Activated CD4-positive, alpha-beta memory T cell treated with anti-CD3 and anti-CD28 coated beads, Interleukin-2, amount 10 ng/mL, durations not matched to agents 7 days and 5 days (primary cell): ENCODE measurements at regions of chr7 and their contacts with region 1.

Region 1: DNA sequence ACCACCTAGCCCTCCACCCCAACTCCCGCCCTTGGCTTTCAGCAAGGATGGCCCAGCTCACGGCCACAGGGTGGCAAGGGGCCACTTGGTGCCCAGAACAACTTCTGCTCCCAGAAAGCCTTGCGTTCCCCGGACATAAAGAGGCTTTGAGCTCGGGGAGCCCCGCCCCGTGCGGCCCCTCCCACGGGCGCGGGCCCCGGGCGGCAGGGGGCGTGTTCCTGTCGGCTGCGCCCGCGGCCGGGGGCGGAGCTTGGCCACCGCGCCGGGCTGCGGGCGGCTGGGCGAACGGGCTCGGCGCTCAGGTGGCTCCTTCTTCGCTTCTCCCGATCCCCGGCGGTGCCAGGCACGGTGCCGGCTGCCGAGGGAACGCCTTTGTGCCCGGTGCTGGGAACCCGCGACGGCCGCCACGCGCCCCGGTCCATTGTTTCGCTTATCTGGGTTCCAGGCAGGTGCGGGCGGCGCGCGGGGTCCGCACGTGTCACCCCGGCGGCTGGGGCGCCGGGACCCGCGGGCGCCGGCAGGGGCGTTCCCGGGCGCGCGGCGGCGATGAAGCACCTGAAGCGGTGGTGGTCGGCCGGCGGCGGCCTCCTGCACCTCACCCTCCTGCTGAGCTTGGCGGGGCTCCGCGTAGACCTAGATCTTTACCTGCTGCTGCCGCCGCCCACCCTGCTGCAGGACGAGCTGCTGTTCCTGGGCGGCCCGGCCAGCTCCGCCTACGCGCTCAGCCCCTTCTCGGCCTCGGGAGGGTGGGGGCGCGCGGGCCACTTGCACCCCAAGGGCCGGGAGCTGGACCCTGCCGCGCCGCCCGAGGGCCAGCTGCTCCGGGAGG is at the start of gene NFE2L3:
- DNase-seq: peak; percentile 88
- H3K4me3 Mint-ChIP-seq: peak within 1 kb of the TSS; percentile 94
- H3K27ac Mint-ChIP-seq: peak within 1 kb of the TSS; percentile 97
- H3K4me1 Mint-ChIP-seq: peaks cover 55% of the 10 kb centered on the region
- H3K27me3 Mint-ChIP-seq: no peaks in the 10 kb centered on the region
- total RNA-seq, gene NFE2L3: 21.5 to 24.0 TPM

Region 2: GRCh38 chr7:26167301-26167934 is 15.3 kb after region 1 on chr7:
- CTCF ChIA-PET with region 1: interaction called, 8 read pairs
- POLR2A ChIA-PET with region 1: interaction called, 34 read pairs
- DNase-seq: peak; percentile 44
- H3K4me3 Mint-ChIP-seq: no peak overlapping the region
- H3K27ac Mint-ChIP-seq: peak overlapping the region; percentile 75
- H3K4me1 Mint-ChIP-seq: peaks cover 36% of the 10 kb centered on the region
- H3K27me3 Mint-ChIP-seq: no peaks in the 10 kb centered on the region

Region 3: GRCh38 chr7:26187380-26188205 is 35.4 kb after region 1 on chr7:
- CTCF ChIA-PET with region 1: interaction called, 7 read pairs
- POLR2A ChIA-PET with region 1: interaction called, 406 read pairs
- DNase-seq: no peak
- H3K4me3 Mint-ChIP-seq: no peak overlapping the region
- H3K27ac Mint-ChIP-seq: peak overlapping the region; percentile 63
- H3K4me1 Mint-ChIP-seq: peaks cover 78% of the 10 kb centered on the region
- H3K27me3 Mint-ChIP-seq: no peaks in the 10 kb centered on the region

Region 4: GRCh38 chr7:26291699-26292538 is 139.8 kb after region 1 on chr7 and contains the start of gene SNX10:
- CTCF ChIA-PET with region 1: no interaction called
- POLR2A ChIA-PET with region 1: interaction called, 10 read pairs
- DNase-seq: peak; percentile 78
- H3K4me3 Mint-ChIP-seq: peak within 1 kb of the TSS; percentile 96
- H3K27ac Mint-ChIP-seq: peak within 1 kb of the TSS; percentile 90
- H3K4me1 Mint-ChIP-seq: peaks cover 39% of the 10 kb centered on the region
- H3K27me3 Mint-ChIP-seq: peaks cover 4% of the 10 kb centered on the region
- total RNA-seq, gene SNX10: 42.4 to 45.7 TPM